ENCODE measurements at regions of chrX and their contacts with region 1.

Region 1: GRCh38 chrX:127762663-127763062 is 289.5 kb downstream of the ACTRT1 start:
- DNase-seq: no peak
- ATAC-seq: no peak
- H3K4me3 ChIP-seq: no peak overlapping the region
- H3K27ac ChIP-seq: no peak overlapping the region
- H3K4me1 ChIP-seq: no peaks in the 10 kb centered on the region
- H3K27me3 ChIP-seq: no peaks in the 10 kb centered on the region
- CTCF ChIP-seq: no peak

Region 2: DNA sequence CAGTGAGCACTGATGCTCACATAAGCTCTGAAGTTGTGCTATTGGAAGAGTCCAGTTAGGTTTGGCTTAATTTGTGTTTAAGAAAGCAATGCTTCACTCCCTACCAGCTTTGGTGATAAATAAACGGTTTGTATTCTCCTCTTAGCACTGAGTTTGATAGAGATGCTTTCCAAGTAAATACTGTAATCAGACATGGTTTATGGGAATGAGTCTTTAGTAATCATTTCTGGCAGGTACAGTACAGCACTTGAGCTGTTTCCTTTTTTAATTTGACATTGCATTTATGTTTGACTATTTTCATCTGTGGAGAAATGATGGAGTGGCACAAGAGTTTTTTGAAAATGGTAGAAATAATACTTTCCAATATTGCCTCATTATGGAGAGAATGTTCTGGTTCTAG is 165.8 kb before region 1 on chrX:
- intact Hi-C with region 1: no loop called
- DNase-seq: no peak
- ATAC-seq: peak in 1 of 8 donors; percentile 77
- H3K4me3 ChIP-seq: no peak overlapping the region
- H3K27ac ChIP-seq: no peak overlapping the region
- H3K4me1 ChIP-seq: no peaks in the 10 kb centered on the region
- H3K27me3 ChIP-seq: no peaks in the 10 kb centered on the region
- CTCF ChIP-seq: no peak

Region 3: GRCh38 chrX:127782904-127783303 is 20.2 kb after region 1 on chrX:
- intact Hi-C with region 1: loop called in 1 of 10 experiments (anchors 2 kb)
- DNase-seq: no peak
- ATAC-seq: peak in 2 of 8 donors; percentile 51 to 55
- H3K4me3 ChIP-seq: no peak overlapping the region
- H3K27ac ChIP-seq: no peak overlapping the region
- H3K4me1 ChIP-seq: no peaks in the 10 kb centered on the region
- H3K27me3 ChIP-seq: no peaks in the 10 kb centered on the region
- CTCF ChIP-seq: no peak

Region 4: GRCh38 chrX:127861611-127862010 is 98.9 kb after region 1 on chrX:
- intact Hi-C with region 1: no loop called
- DNase-seq: no peak
- ATAC-seq: no peak
- H3K4me3 ChIP-seq: no peak overlapping the region
- H3K27ac ChIP-seq: no peak overlapping the region
- H3K4me1 ChIP-seq: no peaks in the 10 kb centered on the region
- H3K27me3 ChIP-seq: no peaks in the 10 kb centered on the region
- CTCF ChIP-seq: no peak

Measured in heart right ventricle (tissue), 16 donors.